Activated CD8-positive, alpha-beta memory T cell treated with anti-CD3 and anti-CD28 coated beads, Interleukin-2, amount 10 ng/mL, durations not matched to agents 7 days and 5 days (primary cell): ENCODE measurements at regions of chr22 and their contacts with region 1.

Region 1: DNA sequence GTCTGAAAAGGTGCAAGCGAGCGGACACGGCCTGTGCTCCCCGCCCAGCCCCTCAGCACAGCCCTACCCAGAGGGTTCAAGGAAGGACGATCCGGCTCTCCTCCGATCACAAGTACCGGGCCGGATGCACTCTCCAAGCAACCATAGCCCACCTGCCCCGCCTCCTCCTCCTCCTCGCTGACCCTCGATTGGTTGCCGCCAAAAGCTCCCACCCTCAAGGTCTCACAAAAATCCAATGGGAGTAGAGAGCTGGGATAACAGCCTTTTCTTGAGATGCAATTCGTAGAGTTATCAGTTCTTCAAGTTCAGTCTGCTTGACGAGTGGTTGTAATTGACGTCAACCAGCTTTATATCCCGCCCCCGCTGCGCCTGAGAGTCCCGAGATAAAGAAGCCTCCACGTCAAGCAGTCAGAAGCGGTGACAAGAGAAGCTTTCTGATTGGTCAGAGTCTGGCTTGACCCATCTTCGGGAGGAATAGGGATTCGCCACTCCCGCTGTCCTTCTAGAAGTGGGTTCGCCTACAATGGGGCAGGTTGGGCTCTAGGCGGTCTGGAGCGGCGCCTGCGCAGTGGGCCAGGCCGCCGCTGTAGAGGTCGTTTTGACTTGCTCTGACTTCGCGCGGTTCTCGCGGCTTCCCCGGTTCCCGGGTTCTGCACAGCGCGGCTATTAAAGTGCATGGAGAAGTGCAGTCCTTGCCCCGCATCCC is at the start of gene IFT27:
- DNase-seq: peak; percentile 99
- ATAC-seq: peak; percentile 93
- H3K4me3 Mint-ChIP-seq: peak within 1 kb of the TSS; percentile 85
- H3K27ac Mint-ChIP-seq: peak within 1 kb of the TSS; percentile 92
- H3K4me1 Mint-ChIP-seq: peaks cover 35% of the 10 kb centered on the region
- H3K27me3 Mint-ChIP-seq: no peaks in the 10 kb centered on the region
- total RNA-seq, gene IFT27: 30.3 to 33.7 TPM

Region 2: DNA sequence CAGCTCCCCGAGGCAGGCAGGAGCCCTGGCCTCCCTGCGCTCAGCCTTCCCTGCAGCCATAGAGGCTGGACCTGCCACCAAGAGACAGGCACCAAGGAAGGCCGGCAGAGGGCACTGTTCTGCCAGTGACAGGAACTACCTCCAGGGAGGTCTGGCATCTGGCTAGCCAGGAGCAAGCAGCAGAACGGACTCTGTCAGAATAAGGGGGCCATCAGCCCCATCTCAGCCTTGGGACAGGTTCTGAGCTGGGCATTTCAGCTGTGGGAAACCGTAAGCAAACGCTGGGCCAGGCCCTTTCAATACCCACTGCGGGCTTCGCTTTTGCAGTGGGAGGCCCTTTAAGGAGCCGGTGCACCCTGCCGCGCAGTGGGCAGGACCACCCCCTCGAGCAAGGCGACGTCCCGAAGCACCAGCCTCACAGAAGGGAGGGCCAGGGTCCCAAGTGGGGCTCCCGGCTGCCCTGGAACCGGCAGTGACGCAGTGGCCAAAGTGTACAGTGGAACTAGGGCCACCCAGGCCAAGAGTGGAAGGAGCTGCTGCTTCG is 18.4 kb before region 1 on chr22:
- CTCF ChIA-PET with region 1: interaction called, 29 read pairs
- DNase-seq: peak; percentile 86
- ATAC-seq: peak; percentile 93
- H3K4me3 Mint-ChIP-seq: no peak overlapping the region
- H3K27ac Mint-ChIP-seq: no peak overlapping the region
- H3K4me1 Mint-ChIP-seq: no peaks in the 10 kb centered on the region
- H3K27me3 Mint-ChIP-seq: peaks cover 10% of the 10 kb centered on the region

Region 3: DNA sequence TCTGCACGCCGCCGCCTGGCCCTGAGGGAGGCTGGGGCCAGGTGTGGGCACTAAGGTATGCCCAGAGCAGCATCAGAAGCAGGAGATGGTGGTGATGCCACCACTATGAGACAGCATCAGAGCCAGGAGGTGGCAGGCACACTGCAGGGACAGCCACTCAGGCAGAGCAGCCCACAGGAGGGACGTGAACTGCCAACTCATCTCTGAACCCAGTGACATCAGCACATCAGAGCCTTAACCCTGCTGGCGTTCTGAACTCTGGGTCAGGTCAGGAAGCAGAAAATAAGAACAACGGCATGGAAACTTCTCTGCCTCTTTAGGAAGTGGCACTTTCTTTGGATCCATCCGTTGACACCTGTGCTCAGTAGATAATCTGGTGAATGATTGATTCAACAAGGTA is 14.5 kb after region 1 on chr22:
- CTCF ChIA-PET with region 1: interaction called, 19 read pairs
- DNase-seq: peak; percentile 80
- ATAC-seq: peak; percentile 99
- H3K4me3 Mint-ChIP-seq: no peak overlapping the region
- H3K27ac Mint-ChIP-seq: peak overlapping the region; percentile 13
- H3K4me1 Mint-ChIP-seq: peaks cover 13% of the 10 kb centered on the region
- H3K27me3 Mint-ChIP-seq: peaks cover 27% of the 10 kb centered on the region

Region 4: GRCh38 chr22:37012262-37012904 is 236.3 kb after region 1 on chr22:
- CTCF ChIA-PET with region 1: no interaction called
- DNase-seq: no peak
- ATAC-seq: no peak
- H3K4me3 Mint-ChIP-seq: no peak overlapping the region
- H3K27ac Mint-ChIP-seq: no peak overlapping the region
- H3K4me1 Mint-ChIP-seq: no peaks in the 10 kb centered on the region
- H3K27me3 Mint-ChIP-seq: peaks cover 17% of the 10 kb centered on the region